ENCODE measurements at regions of chr18 and their contacts with region 1.

Region 1: GRCh38 chr18:50967714-50968661 is at the start of gene ELAC1:
- DNase-seq: peak; percentile 34 to 89 (median 78)

Region 2: GRCh38 chr18:50819728-50820378 is 148.1 kb before region 1 on chr18 and contains the start of gene MRO:
- intact Hi-C with region 1: loop called (anchors 10 kb)
- DNase-seq: peak; percentile 83 to 96 (median 90)

Region 3: GRCh38 chr18:51453594-51453993 is 485.6 kb after region 1 on chr18:
- intact Hi-C with region 1: no loop called
- DNase-seq: no peak

Region 4: DNA sequence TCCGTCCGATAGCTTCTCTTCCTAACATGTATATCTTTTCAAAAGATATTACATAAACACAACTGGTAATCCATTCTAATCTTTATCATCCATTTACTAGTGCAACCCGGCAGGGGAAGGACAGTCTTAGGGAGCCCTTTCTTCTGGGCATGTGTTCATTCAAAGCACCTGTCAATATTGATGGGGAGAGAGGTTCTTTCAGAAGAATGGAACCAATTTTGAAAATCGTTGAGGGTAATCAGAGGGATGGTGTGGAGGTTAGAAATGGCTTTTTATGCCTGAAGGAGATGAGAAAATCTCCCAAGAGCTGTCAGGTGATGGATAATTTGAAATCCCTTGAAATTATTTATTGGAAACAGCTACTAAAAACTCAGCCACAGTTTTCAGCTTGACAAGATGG is 810.1 kb after region 1 on chr18:
- intact Hi-C with region 1: no loop called
- DNase-seq: no peak

Measured in head of caudate nucleus (tissue), 42 donors.